ENCODE measurements at regions of chr18 and their contacts with region 1.

Region 1: DNA sequence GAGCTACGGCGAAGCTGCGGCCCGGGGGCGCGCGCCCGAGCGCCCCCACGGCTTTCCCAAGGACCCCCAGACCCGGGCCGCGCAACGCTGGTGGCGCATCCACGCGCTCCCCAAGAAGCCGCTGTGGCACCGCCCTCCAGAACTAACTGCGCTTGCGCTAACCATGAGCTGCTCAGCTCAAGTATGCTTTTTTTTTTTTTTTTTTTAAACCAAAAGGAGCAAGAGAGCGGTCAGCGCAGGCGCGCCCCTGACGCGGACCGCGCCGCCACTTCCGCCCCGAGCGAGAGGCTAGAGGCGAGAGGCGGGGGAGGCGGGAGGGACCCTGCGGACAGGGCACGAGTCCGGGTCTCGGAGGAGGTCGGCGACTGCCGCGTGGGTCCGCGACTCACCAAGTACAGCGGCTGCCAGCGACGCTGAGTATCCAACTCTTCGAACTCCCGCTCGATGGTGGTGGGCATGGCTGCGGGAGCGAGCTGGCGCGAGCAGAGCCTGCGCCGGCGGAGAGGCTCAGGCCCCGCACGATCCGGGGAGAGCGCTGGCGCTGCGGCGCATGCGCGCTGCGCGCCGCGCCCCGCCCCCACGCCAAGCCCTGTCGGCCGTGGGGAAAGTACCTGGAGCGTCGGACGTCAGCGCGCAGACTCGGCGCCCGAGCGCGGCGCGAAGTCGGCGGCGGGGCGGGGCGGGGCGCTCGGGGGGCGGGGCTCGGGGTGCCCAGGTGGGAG is at the start of gene PTPN2:
- DNase-seq: peak; percentile 89
- H3K4me3 Mint-ChIP-seq: peak within 1 kb of the TSS; percentile 92
- H3K27ac Mint-ChIP-seq: peak within 1 kb of the TSS; percentile 92
- H3K4me1 Mint-ChIP-seq: peaks cover 70% of the 10 kb centered on the region
- H3K27me3 Mint-ChIP-seq: no peaks in the 10 kb centered on the region
- total RNA-seq, gene PTPN2: 76.7 and 77.1 TPM in 2 replicates

Region 2: DNA sequence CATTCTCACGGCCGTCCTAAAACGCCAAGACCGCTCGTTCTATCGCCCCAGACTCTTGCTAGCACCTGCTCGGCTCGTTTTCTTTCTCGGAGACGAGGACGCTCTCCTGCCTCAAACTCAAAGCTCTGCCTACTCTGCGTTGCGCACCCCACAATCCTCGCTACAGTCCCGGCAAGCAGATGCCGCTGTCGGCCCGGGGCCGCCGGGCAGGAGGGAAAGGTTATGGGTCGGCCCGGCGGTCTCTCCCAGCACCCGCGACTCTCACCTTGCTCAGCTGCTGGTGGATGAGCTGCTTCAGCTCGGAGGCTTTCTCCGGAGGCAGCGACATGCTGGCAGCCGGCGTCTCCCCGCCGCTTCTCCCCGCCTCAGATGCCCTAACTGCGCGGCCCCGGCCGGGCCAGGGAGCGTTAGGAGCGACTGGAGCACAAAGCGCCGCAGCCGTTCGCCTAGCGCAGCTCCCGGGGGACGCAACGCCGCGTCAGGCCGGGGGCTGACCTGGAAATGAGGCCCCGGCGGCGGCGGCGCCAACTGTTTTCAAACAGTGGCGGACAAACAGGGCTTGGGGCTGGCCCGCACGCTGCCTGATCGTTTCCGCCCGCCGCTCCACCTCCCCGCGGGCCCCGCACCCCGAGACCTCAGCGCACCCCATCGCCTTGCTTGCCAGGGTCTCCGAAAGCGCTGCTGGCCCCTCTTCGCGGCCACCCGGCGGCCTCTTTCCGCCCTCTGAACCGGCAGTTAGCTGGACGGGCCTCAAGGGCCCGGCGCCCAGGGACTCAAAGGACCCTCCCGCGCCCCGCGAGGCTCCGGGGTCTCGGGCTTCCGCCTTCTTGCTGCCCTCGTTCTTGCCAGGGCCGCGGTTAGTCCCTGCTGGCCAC is 181.4 kb before region 1 on chr18 and contains the starts of genes CEP76 and PSMG2:
- intact Hi-C with region 1: loop called (anchors 1 kb)
- DNase-seq: peak; percentile 80
- H3K4me3 Mint-ChIP-seq: peak within 1 kb of the TSS; percentile 97
- H3K27ac Mint-ChIP-seq: peak within 1 kb of the TSS; percentile 92
- H3K4me1 Mint-ChIP-seq: peaks cover 54% of the 10 kb centered on the region
- H3K27me3 Mint-ChIP-seq: no peaks in the 10 kb centered on the region
- total RNA-seq, gene CEP76: 16.1 and 17.5 TPM in 2 replicates
- total RNA-seq, gene PSMG2: 113 and 118 TPM in 2 replicates

Region 3: GRCh38 chr18:12776821-12777471 is 106.9 kb before region 1 on chr18:
- intact Hi-C with region 1: loop called (anchors 1 kb)
- DNase-seq: no peak
- H3K4me3 Mint-ChIP-seq: no peak overlapping the region
- H3K27ac Mint-ChIP-seq: no peak overlapping the region
- H3K4me1 Mint-ChIP-seq: peaks cover 12% of the 10 kb centered on the region
- H3K27me3 Mint-ChIP-seq: no peaks in the 10 kb centered on the region

Region 4: GRCh38 chr18:12857215-12857905 is 26.5 kb before region 1 on chr18:
- intact Hi-C with region 1: loop called (anchors 2 kb)
- DNase-seq: no peak
- H3K4me3 Mint-ChIP-seq: peak overlapping the region; percentile 53
- H3K27ac Mint-ChIP-seq: peak overlapping the region; percentile 77
- H3K4me1 Mint-ChIP-seq: peaks cover 83% of the 10 kb centered on the region
- H3K27me3 Mint-ChIP-seq: no peaks in the 10 kb centered on the region

Region 5: GRCh38 chr18:12867441-12868123 is 16.3 kb before region 1 on chr18:
- intact Hi-C with region 1: loop called (anchors 1 kb)
- DNase-seq: no peak
- H3K4me3 Mint-ChIP-seq: no peak overlapping the region
- H3K27ac Mint-ChIP-seq: peak overlapping the region; percentile 45
- H3K4me1 Mint-ChIP-seq: peaks cover 40% of the 10 kb centered on the region
- H3K27me3 Mint-ChIP-seq: no peaks in the 10 kb centered on the region

Region 6: DNA sequence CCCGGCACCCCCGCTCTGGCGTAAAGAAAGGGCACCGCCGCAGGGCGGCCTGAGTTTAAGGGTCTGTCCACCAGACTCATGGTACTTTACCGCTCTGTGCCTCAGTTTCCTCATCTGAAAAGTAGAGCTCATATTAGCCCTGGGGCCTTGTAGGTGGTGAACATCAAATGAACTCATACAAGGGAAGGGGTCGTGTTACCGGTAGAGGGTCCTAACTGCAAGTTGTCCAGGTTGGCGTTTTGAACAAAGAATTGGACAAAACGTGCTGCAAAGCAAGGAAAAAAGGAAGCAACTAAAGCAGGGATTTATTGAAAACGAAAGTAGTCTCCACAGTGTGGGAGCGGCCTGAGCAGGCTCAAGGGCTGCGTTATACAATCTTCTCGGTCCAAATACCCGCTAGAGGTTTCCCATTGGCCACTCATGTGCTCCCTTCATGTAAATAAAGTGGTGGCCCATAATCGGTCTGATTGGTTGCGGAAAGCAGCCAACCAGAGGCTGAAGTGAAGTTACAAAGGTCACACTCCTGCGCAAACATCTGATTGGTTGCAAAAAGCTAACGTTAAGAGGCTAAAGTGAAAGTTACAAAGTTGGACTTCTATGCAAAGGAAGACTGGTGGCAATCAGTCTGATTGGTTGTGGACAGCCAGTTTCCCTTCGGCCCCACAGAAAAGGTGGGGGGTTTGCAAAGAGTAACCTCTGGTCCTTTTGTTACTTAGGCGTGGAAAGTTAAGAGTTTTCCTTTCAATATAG is 254.0 kb after region 1 on chr18:
- intact Hi-C with region 1: loop called (anchors 5 kb)
- DNase-seq: peak; percentile 76
- H3K4me3 Mint-ChIP-seq: peak overlapping the region; percentile 91
- H3K27ac Mint-ChIP-seq: peak overlapping the region; percentile 79
- H3K4me1 Mint-ChIP-seq: peaks cover 21% of the 10 kb centered on the region
- H3K27me3 Mint-ChIP-seq: peaks cover 11% of the 10 kb centered on the region

Region 7: DNA sequence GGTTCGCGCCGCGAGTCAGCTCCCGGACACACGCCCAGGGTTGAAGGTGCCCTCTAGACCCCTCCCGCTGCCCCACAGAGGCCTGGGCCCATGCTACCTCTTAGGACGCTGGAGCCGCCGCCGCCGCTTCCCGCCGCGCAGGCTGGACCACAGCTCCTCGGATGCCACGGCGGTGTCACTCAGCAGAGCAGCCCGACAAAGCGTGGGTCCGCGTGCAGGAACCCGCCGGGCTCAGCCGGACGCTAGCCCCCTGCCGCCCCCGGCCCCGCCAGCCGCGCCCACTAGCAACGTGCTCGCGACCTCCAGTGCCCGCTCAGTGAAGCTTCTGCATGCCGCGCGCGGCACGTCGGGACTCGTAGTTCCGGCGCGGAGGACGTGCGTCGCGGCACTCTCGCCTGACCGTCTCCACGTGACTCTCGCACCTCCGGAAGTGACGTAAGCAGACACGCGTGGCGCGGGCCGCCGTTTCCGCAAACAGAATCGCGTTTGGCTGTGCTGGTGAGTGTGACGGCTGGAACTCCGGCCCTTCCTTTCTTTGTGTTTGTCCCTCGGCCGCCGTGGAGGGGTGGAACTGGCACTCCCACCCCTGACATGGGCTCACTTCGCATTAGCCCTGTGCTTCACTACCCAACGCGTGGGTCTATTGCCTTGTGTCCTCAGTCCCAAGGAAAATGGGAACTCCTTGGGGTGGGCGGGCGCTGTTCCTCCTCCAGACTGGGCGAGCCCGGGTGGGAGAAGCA is 842.6 kb after region 1 on chr18 and contains the starts of genes FAM210A and RNMT:
- intact Hi-C with region 1: loop called (anchors 5 kb)
- DNase-seq: peak; percentile 94
- H3K4me3 Mint-ChIP-seq: peak within 1 kb of the TSS; percentile 93
- H3K27ac Mint-ChIP-seq: peak within 1 kb of the TSS; percentile 86
- H3K4me1 Mint-ChIP-seq: peaks cover 72% of the 10 kb centered on the region
- H3K27me3 Mint-ChIP-seq: no peaks in the 10 kb centered on the region
- total RNA-seq, gene FAM210A: 27.7 and 29.5 TPM in 2 replicates
- total RNA-seq, gene RNMT: 55.8 and 60.6 TPM in 2 replicates

Measured in activated T-helper 1 cell treated with anti-CD3 and anti-CD28 coated beads, Interleukin-12 subunit alpha, Interleukin-12 subunit beta, Interleukin-2, Interleukin-4 antibody, amounts not matched to agents 30 ng/mL and 10 ng/mL and 1 ng/mL, durations not matched to agents 14 hours and 24 hours and 36 hours (primary cell).